MCF 10A (cell line): ENCODE measurements at regions of chr3 and their contacts with region 1.

Region 1: GRCh38 chr3:48465531-48466378 is 19.2 kb downstream of the ATRIP start:
- DNase-seq: peak; percentile 99
- H3K4me3 Mint-ChIP-seq: peak overlapping the region; percentile 67
- H3K27ac Mint-ChIP-seq: peak overlapping the region; percentile 99
- H3K4me1 Mint-ChIP-seq: peaks cover 25% of the 10 kb centered on the region
- H3K27me3 Mint-ChIP-seq: no peaks in the 10 kb centered on the region
- CTCF ChIP-seq: peak; percentile 38

Region 2: GRCh38 chr3:48507351-48508061 is 41.8 kb after region 1 on chr3:
- CTCF ChIA-PET with region 1: interaction called, 4 read pairs
- POLR2A ChIA-PET with region 1: interaction called, 3 read pairs
- intact Hi-C with region 1: loop called (anchors 1 kb)
- DNase-seq: peak; percentile 84
- H3K4me3 Mint-ChIP-seq: peak overlapping the region; percentile 35
- H3K27ac Mint-ChIP-seq: peak overlapping the region; percentile 59
- H3K4me1 Mint-ChIP-seq: peaks cover 14% of the 10 kb centered on the region
- H3K27me3 Mint-ChIP-seq: no peaks in the 10 kb centered on the region
- CTCF ChIP-seq: peak; percentile 36

Region 3: DNA sequence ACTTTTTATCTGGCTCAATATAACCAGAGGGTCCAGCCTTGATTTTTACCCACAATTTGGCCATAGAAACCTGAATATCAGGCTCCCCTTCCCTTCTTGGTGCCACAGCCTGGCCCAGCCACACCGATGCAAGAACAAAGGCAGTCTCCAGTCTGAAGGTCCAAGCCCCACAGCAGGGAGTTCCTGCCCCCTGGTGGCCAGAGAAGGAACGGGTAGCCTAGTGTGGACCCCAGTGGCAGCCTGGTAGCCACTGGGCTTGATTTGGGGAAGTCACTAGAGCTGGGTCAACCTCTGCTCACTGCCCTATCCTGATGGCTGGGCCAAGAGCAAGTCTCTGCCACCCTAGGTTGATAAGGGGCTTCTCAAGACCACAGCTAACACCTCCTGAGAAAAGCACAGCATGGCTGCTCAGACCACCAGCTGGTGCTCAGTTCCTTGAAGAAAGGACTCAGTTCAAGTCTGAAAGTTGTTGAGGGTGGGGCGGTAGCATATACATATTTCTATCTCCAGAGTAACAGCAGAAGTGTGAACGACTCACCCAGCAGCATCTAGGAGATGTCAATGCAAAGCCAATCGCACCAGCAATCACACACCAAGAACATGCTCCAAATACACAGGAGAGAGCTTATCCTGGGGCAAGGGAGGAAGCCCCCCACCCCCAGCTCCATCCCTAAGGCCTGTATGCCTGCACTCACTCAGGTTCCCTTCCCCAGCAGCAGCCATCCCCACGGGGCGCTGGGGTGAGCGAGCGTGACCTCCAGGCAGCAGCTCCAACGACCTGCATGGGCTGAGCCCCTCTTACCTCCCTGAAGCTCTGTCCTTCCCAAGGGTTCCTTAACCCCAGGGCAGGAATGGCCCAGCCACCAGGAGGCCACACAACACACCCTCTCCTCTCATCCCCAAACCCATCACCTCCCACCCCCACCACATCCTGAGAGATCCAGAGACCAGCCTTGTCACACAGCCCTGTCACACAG is 83.3 kb after region 1 on chr3:
- CTCF ChIA-PET with region 1: interaction called, 22 read pairs
- POLR2A ChIA-PET with region 1: interaction called, 6 read pairs
- intact Hi-C with region 1: loop called (anchors 1 kb)
- DNase-seq: peak; percentile 80
- H3K4me3 Mint-ChIP-seq: no peak overlapping the region
- H3K27ac Mint-ChIP-seq: no peak overlapping the region
- H3K4me1 Mint-ChIP-seq: no peaks in the 10 kb centered on the region
- H3K27me3 Mint-ChIP-seq: no peaks in the 10 kb centered on the region
- CTCF ChIP-seq: peak; percentile 97